Body of pancreas (tissue), 4 donors: ENCODE measurements at regions of chr19 and their contacts with region 1.

Region 1: DNA sequence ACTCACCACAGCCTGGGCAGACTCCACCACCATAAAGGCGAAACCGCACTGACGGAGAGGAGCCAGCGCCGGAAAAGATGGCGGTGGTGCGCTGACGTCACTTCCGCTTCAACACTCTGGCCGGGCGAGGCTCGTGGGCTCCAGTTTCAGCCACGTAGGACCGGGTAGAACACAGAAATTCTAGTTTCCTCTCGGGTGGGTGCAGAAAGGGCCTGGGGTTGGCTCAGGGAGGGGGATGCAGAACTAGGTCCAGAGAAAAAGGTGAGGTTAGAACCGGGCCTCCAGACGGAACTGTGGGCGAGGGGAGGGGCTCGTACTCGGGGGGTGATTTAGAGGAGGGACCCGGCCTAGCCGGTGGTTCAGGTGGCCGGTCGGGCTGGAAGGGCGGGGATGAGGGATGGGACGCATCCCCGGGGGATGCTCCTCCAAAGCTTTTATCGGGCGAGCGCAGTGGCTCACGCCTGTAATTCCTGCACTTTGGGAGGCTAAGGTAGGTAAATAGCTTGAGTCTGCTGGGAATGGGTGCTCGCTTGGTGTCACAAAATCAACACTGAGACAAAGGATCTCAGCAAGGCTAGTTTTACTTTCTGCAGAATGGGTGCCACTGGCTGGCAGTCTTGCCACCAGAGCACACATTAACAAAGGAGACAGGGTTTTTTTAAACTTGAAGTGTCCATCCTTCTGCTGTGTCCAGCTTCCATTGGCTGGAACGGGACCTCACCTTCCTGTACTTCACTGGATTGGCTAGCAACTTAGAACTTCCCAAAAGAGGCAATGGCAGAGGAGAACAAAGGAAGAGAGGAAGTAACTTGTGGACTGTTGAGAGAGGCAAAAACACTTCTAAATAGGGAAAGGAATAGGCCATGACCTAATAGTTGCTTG is at the start of gene ZNF561:
- DNase-seq: peak; percentile 85 to 87 (median 86)
- ATAC-seq: peak; percentile 90
- H3K4me3 ChIP-seq: peak within 1 kb of the TSS; percentile 65 to 68
- H3K27ac ChIP-seq: peak within 1 kb of the TSS; percentile 76 to 93 (median 92)
- H3K4me1 ChIP-seq: peaks cover 22% of the 10 kb centered on the region
- H3K27me3 ChIP-seq: no peaks in the 10 kb centered on the region
- CTCF ChIP-seq: no peak
- POLR2A ChIP-seq: peak; percentile 6 to 60 (median 60)
- total RNA-seq, gene ZNF561: 12.5 to 17.4 TPM

Region 2: DNA sequence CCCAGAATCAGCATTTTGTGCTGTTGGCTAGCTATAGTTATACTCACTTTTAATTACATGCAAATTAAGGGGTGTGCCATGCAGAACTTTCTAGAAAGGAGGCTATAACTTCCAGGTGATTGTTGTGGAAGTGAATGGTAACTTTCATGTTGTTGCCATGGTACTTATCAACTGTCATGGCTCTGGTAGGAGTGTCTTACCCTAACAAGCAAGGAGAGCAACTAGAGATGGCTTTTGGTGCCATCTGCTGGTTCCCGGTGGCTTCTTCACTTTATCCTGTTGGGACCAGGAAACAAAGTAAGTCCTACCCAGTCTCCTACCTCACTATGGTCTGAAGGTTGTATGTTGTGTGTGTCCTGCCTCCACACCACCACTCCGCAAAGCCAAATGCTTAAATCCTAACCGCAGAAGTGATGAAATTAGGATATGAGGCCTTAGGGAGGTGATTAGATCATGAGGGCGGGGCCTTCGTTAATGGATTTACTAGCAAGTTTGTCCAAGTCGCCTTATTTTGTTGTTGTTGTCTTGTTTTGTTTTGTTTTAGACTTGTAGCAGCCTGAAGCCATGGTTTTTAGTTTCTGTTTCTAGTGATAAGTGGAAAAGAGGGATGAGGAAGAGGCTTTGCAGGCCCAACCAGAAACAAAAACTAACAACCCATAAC is 174.8 kb after region 1 on chr19:
- intact Hi-C with region 1: loop called (anchors 10 kb)
- DNase-seq: peak; percentile 77 to 92 (median 88)
- ATAC-seq: peak; percentile 49
- H3K4me3 ChIP-seq: no peak overlapping the region
- H3K27ac ChIP-seq: peak overlapping the region in 2 of 4 donors; percentile 23 to 50
- H3K4me1 ChIP-seq: peaks cover 6% of the 10 kb centered on the region
- H3K27me3 ChIP-seq: no peaks in the 10 kb centered on the region
- CTCF ChIP-seq: peak; percentile 53 to 88 (median 78)
- POLR2A ChIP-seq: no peak